IMR-90 (cell line): ENCODE measurements at regions of chr9 and their contacts with region 1.

Region 1: GRCh38 chr9:110256380-110257096 is at the start of gene TXN:
- DNase-seq: peak; percentile 87
- ATAC-seq: peak; percentile 91
- H3K4me3 ChIP-seq: peak within 1 kb of the TSS; percentile 71
- H3K27ac ChIP-seq: peak within 1 kb of the TSS; percentile 91
- H3K4me1 ChIP-seq: peaks cover 12% of the 10 kb centered on the region
- H3K27me3 ChIP-seq: no peaks in the 10 kb centered on the region
- CTCF ChIP-seq: no peak
- POLR2A ChIP-seq: peak; percentile 98
- RAD21 ChIP-seq: no peak
- total RNA-seq, gene TXN: 277 and 588 TPM in 2 replicates

Region 2: DNA sequence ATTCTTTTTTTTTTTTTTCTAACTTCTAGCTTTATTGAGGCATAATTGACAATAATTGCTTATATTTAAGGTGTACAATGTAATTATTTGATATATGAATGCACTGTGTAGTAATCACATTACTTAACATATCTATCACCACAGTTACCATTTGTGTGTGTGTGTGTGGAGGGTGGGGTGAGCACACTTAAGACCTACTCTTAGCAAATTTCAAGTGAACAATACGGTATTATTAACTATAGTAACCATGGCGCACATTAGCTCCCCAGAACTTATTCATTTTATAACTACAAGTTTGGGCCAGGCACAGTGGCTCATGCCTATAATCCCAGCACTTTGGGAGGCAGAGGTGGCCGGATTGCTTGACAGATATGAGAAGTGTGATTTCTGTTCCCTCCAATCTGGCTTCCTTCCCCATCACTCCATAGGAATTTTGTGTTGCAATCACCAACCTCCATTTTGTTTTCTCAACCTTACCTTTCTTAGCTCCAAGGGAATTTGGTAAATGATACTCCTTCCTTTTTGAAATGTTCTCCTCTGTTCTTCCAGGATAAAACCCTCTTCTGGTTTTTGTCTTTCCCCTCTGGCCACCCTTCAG is 15.2 kb before region 1 on chr9:
- CTCF ChIA-PET with region 1: no interaction called
- POLR2A ChIA-PET with region 1: no interaction called
- dilution Hi-C with region 1: no loop called
- in situ Hi-C with region 1: no loop called
- intact Hi-C with region 1: no loop called
- DNase-seq: peak; percentile 39
- ATAC-seq: peak; percentile 7; the same call in 1 of the 2 replicates
- H3K4me3 ChIP-seq: no peak overlapping the region
- H3K27ac ChIP-seq: no peak overlapping the region
- H3K4me1 ChIP-seq: peaks cover 3% of the 10 kb centered on the region
- H3K27me3 ChIP-seq: no peaks in the 10 kb centered on the region
- CTCF ChIP-seq: no peak
- POLR2A ChIP-seq: no peak
- RAD21 ChIP-seq: no peak

Region 3: GRCh38 chr9:110266795-110267194 is 10.3 kb after region 1 on chr9:
- CTCF ChIA-PET with region 1: no interaction called
- POLR2A ChIA-PET with region 1: interaction called, 3 read pairs
- dilution Hi-C with region 1: no loop called
- in situ Hi-C with region 1: no loop called
- intact Hi-C with region 1: loop called (anchors 1 kb)
- DNase-seq: no peak
- ATAC-seq: no peak
- H3K4me3 ChIP-seq: no peak overlapping the region
- H3K27ac ChIP-seq: no peak overlapping the region
- H3K4me1 ChIP-seq: no peaks in the 10 kb centered on the region
- H3K27me3 ChIP-seq: no peaks in the 10 kb centered on the region
- CTCF ChIP-seq: no peak
- POLR2A ChIP-seq: no peak
- RAD21 ChIP-seq: no peak

Region 4: DNA sequence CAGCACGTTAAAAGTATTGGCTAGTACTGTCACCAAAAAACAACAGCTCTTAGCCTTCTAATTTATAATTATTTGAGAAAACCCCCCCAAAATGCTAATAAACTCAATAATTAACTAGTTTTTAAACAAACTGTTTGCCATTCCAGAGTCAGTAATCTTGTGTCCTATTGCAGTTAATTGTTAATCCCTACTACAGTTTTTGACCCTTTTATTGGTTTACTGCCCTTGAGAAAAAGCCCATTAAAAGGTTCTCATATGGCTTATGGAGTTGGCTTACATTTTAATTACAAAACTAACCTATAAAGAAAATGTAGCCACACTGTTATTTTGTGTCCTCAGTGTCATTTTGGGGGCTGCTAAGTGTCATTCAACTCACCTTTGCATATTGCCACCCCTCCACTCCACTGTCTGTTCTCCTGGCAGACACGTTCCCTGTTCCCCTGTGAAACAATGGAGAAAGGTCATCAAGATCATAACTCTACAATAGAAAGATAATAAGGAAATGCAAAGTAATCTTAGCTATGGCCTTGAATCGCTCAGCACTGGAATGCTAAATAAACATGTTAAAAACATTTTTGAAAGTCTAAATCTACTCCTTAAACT is 132.7 kb after region 1 on chr9:
- CTCF ChIA-PET with region 1: no interaction called
- POLR2A ChIA-PET with region 1: no interaction called
- dilution Hi-C with region 1: no loop called
- in situ Hi-C with region 1: no loop called
- intact Hi-C with region 1: loop called (anchors 5 kb)
- DNase-seq: no peak
- ATAC-seq: no peak
- H3K4me3 ChIP-seq: no peak overlapping the region
- H3K27ac ChIP-seq: no peak overlapping the region
- H3K4me1 ChIP-seq: no peaks in the 10 kb centered on the region
- H3K27me3 ChIP-seq: no peaks in the 10 kb centered on the region
- CTCF ChIP-seq: no peak
- POLR2A ChIP-seq: no peak
- RAD21 ChIP-seq: no peak

Region 5: DNA sequence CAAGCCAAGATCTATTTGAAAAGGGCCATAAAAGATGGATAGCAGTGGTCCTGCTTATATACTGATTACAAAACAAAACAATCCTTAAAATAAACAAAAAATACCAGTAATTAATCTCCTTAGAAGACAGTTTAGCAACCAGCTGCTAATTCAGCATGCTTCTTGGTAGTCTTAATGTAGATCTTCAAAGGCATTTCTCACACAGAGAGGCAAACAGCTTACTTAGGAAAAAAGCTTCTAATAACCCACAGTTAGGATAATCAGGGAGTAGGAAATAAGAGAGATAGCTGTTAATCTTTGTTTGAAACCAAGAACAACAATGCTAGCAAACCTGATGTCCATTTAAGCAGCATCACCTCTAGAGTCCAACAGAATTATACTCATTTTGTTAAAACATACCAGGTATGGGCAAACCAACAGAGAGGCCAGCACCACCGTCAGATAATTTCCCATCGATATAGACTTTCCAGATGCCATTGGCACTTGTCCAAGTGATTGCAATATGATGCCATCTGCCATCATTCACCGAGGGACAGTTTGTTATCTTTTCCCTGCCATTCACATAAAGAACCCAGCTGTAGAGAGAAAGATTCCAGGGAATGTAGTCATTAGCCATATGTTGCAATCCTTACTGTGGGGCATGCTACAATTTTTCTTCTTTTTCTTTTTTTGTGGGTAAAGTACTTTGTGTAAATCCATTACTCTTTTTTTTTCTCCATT is 186.8 kb after region 1 on chr9:
- CTCF ChIA-PET with region 1: no interaction called
- POLR2A ChIA-PET with region 1: no interaction called
- dilution Hi-C with region 1: no loop called
- in situ Hi-C with region 1: no loop called
- intact Hi-C with region 1: loop called (anchors 5 kb)
- DNase-seq: peak; percentile 84
- ATAC-seq: peak; percentile 12
- H3K4me3 ChIP-seq: no peak overlapping the region
- H3K27ac ChIP-seq: peak overlapping the region; percentile 57
- H3K4me1 ChIP-seq: peaks cover 16% of the 10 kb centered on the region
- H3K27me3 ChIP-seq: no peaks in the 10 kb centered on the region
- CTCF ChIP-seq: no peak
- POLR2A ChIP-seq: no peak
- RAD21 ChIP-seq: no peak

Region 6: GRCh38 chr9:111330124-111330523 is 1073.6 kb after region 1 on chr9 and contains the start of gene OR2K2:
- CTCF ChIA-PET with region 1: no interaction called
- POLR2A ChIA-PET with region 1: interaction called, 22 read pairs
- dilution Hi-C with region 1: no loop called
- in situ Hi-C with region 1: no loop called
- intact Hi-C with region 1: no loop called
- DNase-seq: no peak
- ATAC-seq: no peak
- H3K4me3 ChIP-seq: no peak within 1 kb of the TSS
- H3K27ac ChIP-seq: no peak within 1 kb of the TSS
- H3K4me1 ChIP-seq: no peaks in the 10 kb centered on the region
- H3K27me3 ChIP-seq: peaks cover 3% of the 10 kb centered on the region
- CTCF ChIP-seq: no peak
- POLR2A ChIP-seq: no peak
- RAD21 ChIP-seq: no peak
- total RNA-seq, gene OR2K2: not detected in 2 replicates